Dendritic cell treated with granulocyte-macrophage colony-stimulating factor and Interleukin-4, amounts not matched to agents 40 ng/mL and 50 ng/mL, for 4 days (primary cell): ENCODE measurements at regions of chr9 and their contacts with region 1.

Region 1: DNA sequence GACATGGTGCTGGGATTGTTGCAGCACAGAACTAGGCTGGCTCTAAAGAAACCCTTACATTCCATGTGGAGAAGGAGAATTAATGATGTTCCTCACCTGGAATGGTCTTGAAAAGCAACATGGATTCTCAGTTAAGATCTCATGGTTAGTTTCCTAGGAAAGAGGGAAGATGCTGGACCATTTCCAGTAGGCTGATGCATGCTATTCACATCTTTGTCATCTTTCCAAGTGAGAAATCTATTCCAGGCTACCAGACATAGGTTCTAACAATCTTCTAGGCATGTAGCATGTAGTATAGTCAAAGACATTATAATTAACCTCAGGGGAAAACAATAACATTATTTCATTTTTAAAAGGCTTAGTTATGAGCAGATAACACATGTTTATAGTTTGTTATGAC is 44.3 kb downstream of the TMEM252 start:
- H3K4me3 Mint-ChIP-seq: no peak overlapping the region
- H3K27ac Mint-ChIP-seq: no peak overlapping the region
- H3K4me1 Mint-ChIP-seq: no peaks in the 10 kb centered on the region
- H3K27me3 Mint-ChIP-seq: peaks cover 3% of the 10 kb centered on the region

Region 2: DNA sequence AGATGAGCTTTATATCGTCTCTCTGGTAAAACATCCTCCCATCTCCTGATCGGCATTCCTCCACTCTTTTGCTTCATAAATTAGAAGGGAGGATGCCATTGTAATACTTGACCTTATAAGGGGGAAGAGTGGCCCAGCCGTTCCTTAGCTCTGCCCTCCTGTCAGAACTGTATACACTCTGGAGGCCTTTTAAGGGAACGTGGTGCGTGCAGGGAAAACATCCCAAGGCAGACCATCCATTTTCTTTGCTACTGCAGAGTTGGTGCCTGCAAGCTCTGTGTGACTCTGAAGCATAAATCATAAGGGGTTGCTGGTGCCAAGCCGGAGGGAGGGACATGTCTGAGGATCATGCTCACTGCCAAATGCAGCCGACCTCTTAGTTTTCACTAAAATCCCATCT is 49.5 kb before region 1 on chr9:
- intact Hi-C with region 1: loop called (anchors 5 kb)
- H3K4me3 Mint-ChIP-seq: no peak overlapping the region
- H3K27ac Mint-ChIP-seq: no peak overlapping the region
- H3K4me1 Mint-ChIP-seq: no peaks in the 10 kb centered on the region
- H3K27me3 Mint-ChIP-seq: no peaks in the 10 kb centered on the region